ENCODE measurements at regions of chr20 and their contacts with region 1.

Region 1: DNA sequence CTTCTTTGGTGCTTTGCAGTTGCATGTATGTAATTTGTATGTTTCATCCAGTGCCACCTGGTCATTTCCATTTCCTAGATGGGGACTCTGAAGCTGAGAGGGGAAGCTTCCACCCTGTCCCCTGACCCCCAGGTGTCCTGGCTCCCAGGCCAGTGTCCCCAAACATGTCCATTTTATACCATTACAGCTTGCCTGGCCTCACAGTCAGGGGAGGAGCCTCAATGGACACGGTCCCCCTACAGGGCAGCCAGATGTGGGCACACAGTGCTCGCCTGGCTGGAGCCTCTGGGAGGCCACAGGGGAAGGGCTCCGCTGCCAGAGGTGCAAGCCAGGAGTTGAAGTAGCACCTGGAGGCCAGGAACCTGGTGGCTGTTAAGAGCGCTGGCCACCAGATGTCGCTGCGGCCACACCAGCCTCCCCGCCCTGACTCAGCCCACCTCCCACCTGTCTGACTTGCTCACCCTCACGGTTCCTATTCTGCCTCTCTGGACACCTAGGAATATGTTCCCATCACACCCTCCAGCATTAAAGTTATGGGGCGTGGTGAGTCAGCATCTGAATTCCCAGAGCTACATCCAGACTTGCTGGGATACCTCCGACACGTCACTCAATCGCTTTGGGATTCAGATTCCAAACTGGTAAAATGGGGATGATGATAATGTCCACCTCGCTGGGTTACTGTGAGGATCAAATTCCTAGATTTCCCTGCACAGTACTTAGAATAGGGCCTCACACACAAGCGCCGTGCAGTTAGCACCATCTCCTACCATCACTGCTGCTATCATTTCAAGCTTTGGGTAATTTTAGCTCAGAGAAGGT is 107.4 kb downstream of the SULF2 start:
- DNase-seq: peak; percentile 59 to 89
- H3K4me3 ChIP-seq: no peak overlapping the region
- H3K27ac ChIP-seq: no peak overlapping the region
- H3K4me1 ChIP-seq: peaks cover 0 to 7% (median 2%) of the 10 kb centered on the region in 4 experiments; a peak in 5 of 7 replicates
- H3K27me3 ChIP-seq: no peaks in the 10 kb centered on the region
- CTCF ChIP-seq: peak; percentile 93 to 97 (median 95)
- EP300 ChIP-seq: no peak
- POLR2A ChIP-seq: no peak
- RAD21 ChIP-seq: peak; percentile 94 to 96

Region 2: GRCh38 chr20:47551841-47552240 is 126.0 kb before region 1 on chr20:
- CTCF ChIA-PET with region 1: no interaction called
- POLR2A ChIA-PET with region 1: no interaction called
- DNase-seq: no peak
- H3K4me3 ChIP-seq: no peak overlapping the region
- H3K27ac ChIP-seq: no peak overlapping the region
- H3K4me1 ChIP-seq: peaks cover 0 to under 1% (median 0%) of the 10 kb centered on the region in 4 experiments; a peak in 2 of 7 replicates
- H3K27me3 ChIP-seq: no peaks in the 10 kb centered on the region
- CTCF ChIP-seq: no peak
- EP300 ChIP-seq: no peak
- POLR2A ChIP-seq: no peak
- RAD21 ChIP-seq: no peak

Region 3: DNA sequence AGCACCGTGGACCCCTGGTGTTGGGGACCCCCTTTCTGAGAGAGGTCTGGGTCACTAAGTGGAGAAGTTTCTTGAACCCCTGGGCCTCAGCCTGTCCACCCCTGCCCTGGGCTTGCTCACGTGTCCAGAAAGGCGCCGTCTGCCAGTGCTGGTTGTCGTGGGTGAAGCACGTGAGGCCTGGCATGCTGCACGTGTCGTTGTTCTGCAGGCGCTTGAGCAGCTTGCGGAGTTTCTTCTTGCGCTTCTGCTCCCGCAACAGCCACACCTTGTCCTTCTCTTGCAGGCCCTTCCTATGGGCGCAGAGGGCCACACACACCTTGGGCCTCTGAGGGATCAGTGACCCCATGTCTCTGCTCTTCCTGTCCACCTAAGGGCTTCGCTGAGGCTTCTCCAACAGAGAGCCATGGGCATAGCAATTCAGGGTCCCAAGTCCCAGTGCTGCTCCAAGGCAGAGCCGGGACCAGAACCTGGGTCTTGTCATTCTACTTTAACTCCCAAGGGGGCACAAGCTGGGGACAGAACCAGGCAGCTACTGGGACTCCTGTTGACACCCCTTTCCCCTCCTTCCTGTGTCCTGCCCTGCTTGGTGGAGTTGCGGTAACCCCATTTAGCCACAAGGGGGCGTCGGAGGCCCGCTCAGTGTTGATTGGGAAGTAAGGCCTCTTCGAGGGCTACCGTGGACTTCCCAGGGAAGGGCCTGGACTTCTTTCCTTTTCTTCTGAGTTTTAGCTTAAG is 14.3 kb before region 1 on chr20:
- CTCF ChIA-PET with region 1: interaction called, 92 read pairs
- POLR2A ChIA-PET with region 1: interaction called, 3 read pairs
- DNase-seq: peak; percentile 75 to 99
- H3K4me3 ChIP-seq: no peak overlapping the region
- H3K27ac ChIP-seq: no peak overlapping the region
- H3K4me1 ChIP-seq: peaks cover 0 to 4% (median 1%) of the 10 kb centered on the region in 4 experiments; a peak in 4 of 7 replicates
- H3K27me3 ChIP-seq: no peaks in the 10 kb centered on the region
- CTCF ChIP-seq: peak; percentile 91 to 98 (median 95)
- EP300 ChIP-seq: no peak
- POLR2A ChIP-seq: no peak
- RAD21 ChIP-seq: peak; percentile 91 to 94

Region 4: DNA sequence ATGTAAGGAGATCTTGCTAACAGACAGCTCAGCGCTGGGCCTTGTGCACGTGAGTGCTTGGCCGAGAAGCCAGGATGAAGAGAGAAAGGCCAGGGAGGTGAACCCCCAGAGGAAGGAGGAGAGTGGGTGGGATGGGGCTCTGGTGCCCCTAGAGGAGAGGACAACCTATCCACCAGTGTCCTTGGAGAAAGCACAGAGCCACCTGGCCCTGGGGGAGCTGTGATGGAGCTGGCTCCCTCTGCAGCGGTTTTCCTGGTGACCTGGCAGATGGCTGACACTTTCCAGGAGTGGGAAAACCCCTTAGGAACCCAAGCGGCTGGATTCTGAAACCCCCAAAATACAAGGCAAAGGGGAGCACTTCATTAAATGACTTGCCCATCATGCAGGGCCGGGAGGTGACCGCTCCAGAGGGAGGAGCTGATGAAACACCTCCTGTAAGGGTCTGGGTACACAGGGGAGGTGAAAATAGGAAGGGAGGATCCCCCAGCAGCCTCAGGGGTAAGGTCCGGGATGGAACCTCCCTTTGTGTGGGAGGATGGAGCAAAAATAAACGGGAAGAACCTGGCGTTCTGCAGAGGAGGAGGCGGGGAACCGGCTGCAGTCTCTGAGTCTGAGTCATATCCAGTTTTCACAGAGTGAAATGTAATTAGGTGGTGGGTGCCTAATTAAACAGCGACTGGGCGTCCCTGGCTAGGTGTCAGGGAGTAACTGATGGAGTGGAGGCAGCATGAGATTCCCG is 27.1 kb after region 1 on chr20:
- CTCF ChIA-PET with region 1: interaction called, 10 read pairs
- POLR2A ChIA-PET with region 1: no interaction called
- DNase-seq: no peak
- H3K4me3 ChIP-seq: no peak overlapping the region
- H3K27ac ChIP-seq: no peak overlapping the region
- H3K4me1 ChIP-seq: no peaks in the 10 kb centered on the region
- H3K27me3 ChIP-seq: no peaks in the 10 kb centered on the region
- CTCF ChIP-seq: no peak
- EP300 ChIP-seq: no peak
- POLR2A ChIP-seq: no peak
- RAD21 ChIP-seq: no peak

Region 5: GRCh38 chr20:47713878-47714450 is 36.1 kb after region 1 on chr20:
- CTCF ChIA-PET with region 1: interaction called, 16 read pairs
- POLR2A ChIA-PET with region 1: no interaction called
- DNase-seq: no peak
- H3K4me3 ChIP-seq: no peak overlapping the region
- H3K27ac ChIP-seq: no peak overlapping the region
- H3K4me1 ChIP-seq: peaks cover 0 to 2% (median 0%) of the 10 kb centered on the region in 4 experiments; a peak in 1 of 7 replicates
- H3K27me3 ChIP-seq: no peaks in the 10 kb centered on the region
- CTCF ChIP-seq: no peak
- EP300 ChIP-seq: no peak
- POLR2A ChIP-seq: no peak
- RAD21 ChIP-seq: no peak

Region 6: DNA sequence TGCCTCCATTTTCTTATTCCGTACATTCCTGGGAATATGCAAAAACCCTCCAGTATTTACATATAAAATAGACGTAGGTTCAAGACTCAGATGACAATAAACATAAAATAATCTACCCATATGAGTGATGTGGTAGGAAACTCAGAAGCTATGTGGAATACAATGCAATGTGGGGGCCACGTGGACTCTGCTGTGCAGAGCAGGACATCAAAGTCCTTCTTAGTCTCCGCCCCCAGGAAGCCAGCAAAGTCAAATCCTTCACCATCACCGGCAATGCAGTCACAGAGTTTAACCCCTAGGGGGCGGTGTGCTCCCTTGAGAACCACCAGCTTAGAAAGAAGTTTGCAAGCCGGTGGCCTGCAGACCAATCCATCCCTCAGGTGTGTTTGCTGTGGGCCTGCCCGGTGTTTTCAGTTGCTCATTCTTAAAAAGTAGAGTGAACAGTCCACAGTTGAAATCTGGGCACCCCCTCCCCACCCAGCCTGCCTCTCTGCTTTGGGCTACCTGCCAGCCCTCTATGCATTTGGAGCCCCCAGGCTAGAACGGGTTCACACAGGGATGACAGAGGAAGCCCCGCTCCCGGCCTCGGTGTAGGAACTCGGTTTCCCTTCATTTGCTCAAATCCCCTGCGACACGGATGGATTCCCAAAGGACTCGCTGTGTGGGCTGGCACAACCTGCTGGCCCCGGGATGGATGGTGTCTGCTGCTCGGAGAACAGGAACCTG is 47.6 kb after region 1 on chr20:
- CTCF ChIA-PET with region 1: interaction called, 11 read pairs
- POLR2A ChIA-PET with region 1: no interaction called
- DNase-seq: peak; percentile 70 to 85
- H3K4me3 ChIP-seq: no peak overlapping the region
- H3K27ac ChIP-seq: no peak overlapping the region
- H3K4me1 ChIP-seq: no peaks in the 10 kb centered on the region; a peak in 1 of 7 replicates
- H3K27me3 ChIP-seq: no peaks in the 10 kb centered on the region
- CTCF ChIP-seq: peak; percentile 79 to 94 (median 84)
- EP300 ChIP-seq: no peak
- POLR2A ChIP-seq: no peak
- RAD21 ChIP-seq: peak; percentile 89 to 93

Region 7: DNA sequence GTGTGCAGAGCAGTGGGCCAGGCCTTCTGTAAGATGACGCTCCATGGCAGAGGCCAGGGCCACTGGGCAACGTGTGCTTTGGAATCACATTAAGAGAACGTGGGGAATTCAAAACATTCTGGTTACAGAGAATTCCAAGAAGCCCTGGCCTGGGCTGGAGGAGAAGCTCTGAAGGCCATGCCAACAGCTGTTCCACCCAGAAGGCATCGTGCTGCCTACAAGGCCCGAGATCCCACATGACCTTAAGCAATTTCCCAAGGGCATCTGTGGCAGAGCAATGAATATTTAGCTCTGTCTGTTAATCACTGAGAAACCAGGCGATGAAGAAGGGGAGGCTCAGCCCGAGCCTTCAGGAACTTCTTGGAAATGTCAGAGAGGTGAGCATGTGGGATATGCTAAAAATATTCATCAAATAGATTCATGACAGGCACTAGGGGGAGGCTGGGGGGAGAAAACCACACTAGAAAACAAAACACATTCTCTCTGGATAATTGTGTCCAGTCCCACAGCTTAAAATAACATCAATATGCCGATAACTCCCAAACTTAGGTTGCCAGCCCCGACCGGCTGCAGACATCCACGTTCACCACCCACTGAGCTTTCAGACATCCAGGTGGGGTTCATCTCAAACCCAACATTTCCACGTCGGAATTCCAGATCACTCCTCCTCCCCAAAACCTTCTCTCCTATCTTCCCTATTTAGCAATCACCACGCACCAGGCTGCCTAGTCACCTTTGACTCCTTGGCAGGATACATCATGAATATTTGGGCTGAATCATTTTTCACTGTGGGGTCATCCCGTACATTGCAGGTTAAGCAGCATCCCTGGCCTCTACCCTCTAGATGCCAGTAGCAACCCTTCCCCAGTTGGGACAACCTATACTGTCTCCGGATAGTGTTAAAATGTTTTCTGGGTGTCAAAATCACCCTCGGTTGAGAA is 100.8 kb after region 1 on chr20:
- CTCF ChIA-PET with region 1: interaction called, 14 read pairs
- POLR2A ChIA-PET with region 1: no interaction called
- DNase-seq: no peak
- H3K4me3 ChIP-seq: no peak overlapping the region
- H3K27ac ChIP-seq: no peak overlapping the region
- H3K4me1 ChIP-seq: no peaks in the 10 kb centered on the region
- H3K27me3 ChIP-seq: peaks cover 0 to 10% (median 7%) of the 10 kb centered on the region in 4 experiments; a peak in 6 of 7 replicates
- CTCF ChIP-seq: no peak
- EP300 ChIP-seq: no peak
- POLR2A ChIP-seq: no peak
- RAD21 ChIP-seq: no peak

Region 8: DNA sequence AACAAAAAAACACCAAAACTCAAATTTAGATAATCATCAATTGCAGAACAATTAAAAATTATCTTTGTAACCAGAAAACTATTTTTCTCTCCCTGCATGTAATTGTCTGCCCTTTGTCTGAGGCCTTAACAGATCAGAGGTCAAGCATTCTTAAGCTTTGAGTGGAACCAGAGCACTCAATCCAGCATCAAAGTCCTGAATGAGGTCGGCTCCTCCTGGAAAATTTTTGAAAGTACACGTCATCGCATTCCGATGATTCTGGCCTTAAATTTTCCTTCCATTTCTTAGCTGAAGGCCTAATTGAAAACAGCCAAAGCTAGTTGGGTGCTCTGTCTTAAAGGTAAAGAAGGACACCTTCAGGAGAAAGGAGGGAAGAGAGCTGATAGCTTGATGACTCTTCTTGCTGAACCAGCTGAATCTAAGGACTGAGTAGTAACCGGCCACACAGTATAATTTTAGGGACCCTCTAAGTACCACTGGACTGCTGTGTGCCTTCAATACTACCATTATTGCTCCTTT is 617.7 kb after region 1 on chr20:
- CTCF ChIA-PET with region 1: interaction called, 13 read pairs
- POLR2A ChIA-PET with region 1: no interaction called
- DNase-seq: peak in 1 of 2 experiments; percentile 80
- H3K4me3 ChIP-seq: no peak overlapping the region
- H3K27ac ChIP-seq: peak overlapping the region; percentile 52
- H3K4me1 ChIP-seq: peaks cover 6 to 23% (median 11%) of the 10 kb centered on the region in 4 experiments
- H3K27me3 ChIP-seq: no peaks in the 10 kb centered on the region
- CTCF ChIP-seq: peak in 2 of 3 experiments; percentile 48 to 57; a peak in 2 of 4 replicates
- EP300 ChIP-seq: peak in 1 of 2 experiments; percentile 25; a peak in 1 of 3 replicates
- POLR2A ChIP-seq: no peak
- RAD21 ChIP-seq: peak; percentile 84 to 89

Measured in H1 (cell line).